OCI-LY7 (cell line): ENCODE measurements at regions of chr13 and their contacts with region 1.

Region 1: GRCh38 chr13:51797664-51798488 is 6.1 kb downstream of the DHRS12 start:
- DNase-seq: peak; percentile 84
- H3K4me3 ChIP-seq: no peak overlapping the region
- H3K27ac ChIP-seq: no peak overlapping the region
- H3K4me1 ChIP-seq: peaks cover 88% of the 10 kb centered on the region
- CTCF ChIP-seq: peak; percentile 82

Region 2: GRCh38 chr13:51125498-51126226 is 672.2 kb before region 1 on chr13:
- CTCF ChIA-PET with region 1: no interaction called
- POLR2A ChIA-PET with region 1: no interaction called
- intact Hi-C with region 1: loop called (anchors 1 kb)
- DNase-seq: peak; percentile 76
- H3K4me3 ChIP-seq: no peak overlapping the region
- H3K27ac ChIP-seq: no peak overlapping the region
- H3K4me1 ChIP-seq: no peaks in the 10 kb centered on the region
- CTCF ChIP-seq: peak; percentile 92

Region 3: DNA sequence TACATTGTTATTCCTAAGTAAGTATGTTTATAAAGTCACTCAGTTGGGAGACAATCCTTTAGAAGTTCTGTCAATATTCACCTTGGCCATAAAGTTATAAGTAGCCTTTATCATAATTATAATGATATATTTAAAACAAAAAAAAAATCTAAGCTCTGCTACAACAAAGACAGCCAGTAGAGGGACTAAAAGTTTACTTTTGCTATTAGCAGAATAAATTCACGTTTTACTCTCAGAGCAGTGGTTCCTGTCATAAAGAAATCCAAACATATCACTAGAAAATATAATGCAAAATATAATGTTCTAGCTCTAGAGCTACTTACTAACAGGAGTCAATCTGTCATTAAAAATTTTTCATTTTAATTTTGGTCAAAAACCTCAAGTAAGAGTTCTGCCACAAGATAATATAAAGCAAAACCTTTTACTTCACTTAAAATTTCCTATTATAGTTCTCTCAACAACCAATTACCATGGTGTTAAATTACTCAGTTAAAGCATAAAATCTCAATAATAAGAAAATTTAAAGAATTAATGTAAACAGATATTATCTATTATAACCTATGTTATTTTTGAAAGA is 362.8 kb before region 1 on chr13:
- CTCF ChIA-PET with region 1: interaction called, 5 read pairs
- POLR2A ChIA-PET with region 1: interaction called, 3 read pairs
- intact Hi-C with region 1: loop called (anchors 1 kb)
- DNase-seq: peak; percentile 45
- H3K4me3 ChIP-seq: no peak overlapping the region
- H3K27ac ChIP-seq: no peak overlapping the region
- H3K4me1 ChIP-seq: no peaks in the 10 kb centered on the region
- CTCF ChIP-seq: peak; percentile 83

Region 4: GRCh38 chr13:51704399-51705313 is 93.2 kb before region 1 on chr13:
- CTCF ChIA-PET with region 1: no interaction called
- POLR2A ChIA-PET with region 1: interaction called, 3 read pairs
- intact Hi-C with region 1: loop called (anchors 5 kb)
- DNase-seq: peak; percentile 53
- H3K4me3 ChIP-seq: peak overlapping the region; percentile 26
- H3K27ac ChIP-seq: peak overlapping the region; percentile 68
- H3K4me1 ChIP-seq: peaks cover 27% of the 10 kb centered on the region
- CTCF ChIP-seq: no peak

Region 5: DNA sequence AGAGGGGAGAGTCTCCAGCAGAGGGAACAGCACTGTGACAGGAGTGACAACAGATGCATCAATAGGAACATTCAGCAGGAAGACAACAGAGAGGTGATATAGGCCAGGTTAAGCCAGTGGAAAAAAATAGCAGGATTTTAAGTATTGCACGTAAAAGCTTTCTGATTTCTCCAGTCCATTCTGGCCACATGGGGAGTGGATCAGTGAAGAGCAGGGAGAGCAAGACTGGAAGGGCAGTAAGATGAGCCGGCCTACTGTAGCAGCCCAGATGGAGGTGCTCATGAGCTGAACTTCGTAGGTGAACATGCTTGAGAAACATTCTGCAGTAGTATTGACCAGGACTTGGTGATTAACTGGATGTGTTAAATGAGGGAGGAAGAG is 228.4 kb after region 1 on chr13:
- CTCF ChIA-PET with region 1: no interaction called
- POLR2A ChIA-PET with region 1: no interaction called
- intact Hi-C with region 1: no loop called
- DNase-seq: no peak
- H3K4me3 ChIP-seq: no peak overlapping the region
- H3K27ac ChIP-seq: no peak overlapping the region
- H3K4me1 ChIP-seq: no peaks in the 10 kb centered on the region
- CTCF ChIP-seq: 0 out of 2 replicates have a peak, but pooled peaks have one; percentile 25